ENCODE measurements at regions of chr1 and their contacts with region 1.

Region 1: GRCh38 chr1:48931506-48932251 is 155.0 kb upstream of the BEND5 start:
- DNase-seq: no peak
- ATAC-seq: no peak
- H3K4me3 ChIP-seq: no peak overlapping the region
- H3K27ac ChIP-seq: no peak overlapping the region
- H3K4me1 ChIP-seq: no peaks in the 10 kb centered on the region
- H3K27me3 ChIP-seq: no peaks in the 10 kb centered on the region
- CTCF ChIP-seq: no peak
- EP300 ChIP-seq: no peak
- POLR2A ChIP-seq: no peak
- RAD21 ChIP-seq: no peak

Region 2: DNA sequence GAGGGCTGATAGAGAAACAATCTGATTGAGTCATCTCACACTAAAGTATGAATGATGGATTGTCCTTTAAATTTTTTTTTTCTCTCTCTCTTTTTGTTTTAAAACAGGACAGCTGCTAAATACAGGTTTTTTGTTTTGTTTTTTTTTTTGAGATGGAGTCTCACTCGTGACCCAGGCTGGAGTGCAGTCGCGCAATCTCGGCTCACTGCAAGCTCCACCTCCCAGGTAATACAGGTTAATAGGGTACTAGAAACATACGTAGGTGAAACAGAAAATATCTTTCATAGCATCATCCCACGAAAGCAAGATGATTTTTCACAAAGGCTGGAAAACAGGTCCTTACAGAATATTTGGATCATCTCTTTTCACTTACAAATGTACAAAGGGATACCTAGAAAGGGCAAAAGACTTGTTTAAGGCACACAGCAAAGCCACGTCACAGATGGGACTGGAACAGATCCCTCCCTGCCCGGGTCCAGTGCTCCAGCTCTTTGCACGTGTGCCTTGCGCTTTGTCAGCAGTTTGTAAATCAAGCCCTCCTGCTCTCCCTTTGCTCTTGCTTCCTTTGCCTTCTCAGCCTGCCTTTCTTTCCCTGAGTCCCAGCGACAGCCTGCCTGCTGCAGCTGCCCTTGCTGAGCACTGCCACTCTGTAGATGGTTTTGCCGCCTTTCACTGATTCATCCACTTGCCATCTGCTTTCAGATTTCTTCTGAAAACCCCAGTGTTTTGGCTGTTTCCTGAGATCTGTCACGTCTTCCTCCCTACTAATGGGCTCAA is 16.3 kb after region 1 on chr1:
- CTCF ChIA-PET with region 1: no interaction called
- POLR2A ChIA-PET with region 1: no interaction called
- in situ Hi-C with region 1: no loop called
- intact Hi-C with region 1: no loop called
- DNase-seq: no peak
- ATAC-seq: no peak
- H3K4me3 ChIP-seq: no peak overlapping the region
- H3K27ac ChIP-seq: no peak overlapping the region
- H3K4me1 ChIP-seq: no peaks in the 10 kb centered on the region
- H3K27me3 ChIP-seq: no peaks in the 10 kb centered on the region
- CTCF ChIP-seq: no peak
- EP300 ChIP-seq: no peak
- POLR2A ChIP-seq: no peak
- RAD21 ChIP-seq: no peak

Region 3: DNA sequence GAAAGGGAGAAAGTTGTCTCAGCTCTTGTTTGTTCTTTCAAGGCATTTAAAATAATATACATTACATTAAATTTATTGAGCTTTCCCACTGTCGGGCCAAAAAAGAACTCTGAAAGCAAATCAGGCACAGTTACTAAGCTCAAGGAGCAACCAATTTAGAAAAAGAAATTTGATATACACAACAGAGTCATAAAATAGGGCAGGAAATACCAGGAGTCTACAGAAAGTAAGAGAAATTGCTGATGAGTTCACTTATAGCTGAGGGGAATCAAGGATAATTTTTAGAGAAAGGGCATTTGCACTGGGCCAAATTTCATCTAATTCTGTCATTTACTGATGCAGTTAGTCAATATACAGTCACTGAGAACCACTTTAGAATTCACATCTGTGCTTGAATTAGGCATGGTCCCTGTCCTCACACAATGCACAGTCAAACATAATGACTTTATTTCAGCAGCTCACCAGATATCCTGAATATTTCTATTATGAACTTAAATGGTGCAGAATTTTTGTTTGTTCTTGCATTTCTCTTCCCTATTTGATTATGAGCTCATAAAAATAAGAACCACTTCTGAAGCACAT is 94.6 kb after region 1 on chr1:
- CTCF ChIA-PET with region 1: no interaction called
- POLR2A ChIA-PET with region 1: no interaction called
- in situ Hi-C with region 1: no loop called
- intact Hi-C with region 1: loop called (anchors 5 kb)
- DNase-seq: no peak
- ATAC-seq: no peak
- H3K4me3 ChIP-seq: no peak overlapping the region
- H3K27ac ChIP-seq: no peak overlapping the region
- H3K4me1 ChIP-seq: no peaks in the 10 kb centered on the region
- H3K27me3 ChIP-seq: no peaks in the 10 kb centered on the region
- CTCF ChIP-seq: no peak
- EP300 ChIP-seq: no peak
- POLR2A ChIP-seq: no peak
- RAD21 ChIP-seq: no peak